Activated CD4-positive, alpha-beta memory T cell treated with anti-CD3 and anti-CD28 coated beads, Interleukin-2, amount 10 ng/mL, durations not matched to agents 7 days and 5 days (primary cell): ENCODE measurements at regions of chr13 and their contacts with region 1.

Region 1: DNA sequence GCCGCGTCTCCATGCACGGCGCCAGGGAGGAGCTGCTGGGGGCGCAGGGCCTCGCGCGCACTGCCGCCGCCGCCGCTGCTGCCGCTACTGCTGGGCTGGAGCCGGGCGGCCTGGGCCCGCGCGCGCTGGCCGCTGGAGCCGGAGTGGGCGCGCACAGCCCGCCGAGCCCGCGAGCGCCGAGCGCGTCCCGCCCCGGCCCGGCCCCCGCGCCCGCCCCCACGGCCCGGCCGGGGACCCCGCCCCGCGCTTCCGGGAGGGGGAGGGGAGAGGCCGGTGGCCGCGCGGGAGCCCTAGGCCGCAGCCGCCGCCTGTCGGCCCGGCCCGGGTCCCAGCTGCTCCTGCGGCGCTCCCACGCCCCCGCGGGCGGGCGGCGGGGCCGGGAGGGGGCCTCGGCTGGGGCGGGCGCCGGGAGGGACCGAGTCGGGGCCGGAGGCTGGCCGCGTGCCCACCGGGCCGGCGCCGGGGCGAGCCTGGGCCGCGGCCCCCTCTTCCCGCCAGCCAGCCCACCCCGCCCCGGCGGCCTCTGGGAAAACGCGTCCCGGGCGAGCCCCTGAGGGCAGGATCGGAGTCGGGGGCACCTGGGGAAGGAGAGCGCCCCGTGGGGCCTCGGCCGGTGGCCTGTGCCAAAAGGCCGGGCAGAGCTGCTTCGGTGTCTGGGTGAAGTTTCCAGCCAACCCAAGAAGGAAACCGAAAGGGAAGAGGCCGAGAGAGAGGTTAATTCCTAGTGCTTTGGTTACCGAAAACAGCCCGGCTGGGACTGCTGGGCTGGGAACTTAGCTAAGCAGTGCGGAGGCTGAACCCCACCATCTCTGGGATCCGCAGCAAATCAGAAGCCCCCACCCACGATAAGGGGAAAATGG is at the start of gene STK24:
- DNase-seq: peak; percentile 72
- H3K4me3 Mint-ChIP-seq: peak within 1 kb of the TSS; percentile 94
- H3K27ac Mint-ChIP-seq: peak within 1 kb of the TSS; percentile 86
- H3K4me1 Mint-ChIP-seq: peaks cover 38% of the 10 kb centered on the region
- H3K27me3 Mint-ChIP-seq: no peaks in the 10 kb centered on the region
- total RNA-seq, gene STK24: 189 to 204 TPM

Region 2: DNA sequence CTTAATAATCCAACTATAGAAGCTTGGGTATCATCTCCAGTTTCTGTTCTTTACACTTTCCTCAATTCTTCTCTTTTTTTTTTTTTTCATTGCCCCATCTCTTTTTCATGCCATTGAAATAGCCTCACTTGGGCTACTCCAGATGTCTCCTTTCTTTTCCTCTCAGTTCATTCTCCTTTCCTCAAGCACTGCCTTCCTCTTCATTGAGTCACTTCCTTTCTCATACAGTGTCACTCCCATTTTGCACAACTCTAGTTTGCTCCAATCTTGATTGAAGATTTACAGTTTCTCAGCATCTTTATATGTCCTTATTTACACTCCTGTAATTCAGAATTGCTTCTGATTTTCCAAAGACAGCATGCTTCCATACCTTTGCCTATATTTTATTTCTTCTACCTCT is 562.4 kb before region 1 on chr13:
- CTCF ChIA-PET with region 1: no interaction called
- POLR2A ChIA-PET with region 1: no interaction called
- DNase-seq: no peak
- H3K4me3 Mint-ChIP-seq: no peak overlapping the region
- H3K27ac Mint-ChIP-seq: no peak overlapping the region
- H3K4me1 Mint-ChIP-seq: peaks cover 5% of the 10 kb centered on the region
- H3K27me3 Mint-ChIP-seq: no peaks in the 10 kb centered on the region

Region 3: GRCh38 chr13:98484289-98485219 is 92.6 kb before region 1 on chr13:
- CTCF ChIA-PET with region 1: interaction called, 4 read pairs
- POLR2A ChIA-PET with region 1: interaction called, 11 read pairs
- DNase-seq: peak; percentile 83
- H3K4me3 Mint-ChIP-seq: peak overlapping the region; percentile 51
- H3K27ac Mint-ChIP-seq: peak overlapping the region; percentile 90
- H3K4me1 Mint-ChIP-seq: peaks cover 90% of the 10 kb centered on the region
- H3K27me3 Mint-ChIP-seq: no peaks in the 10 kb centered on the region

Region 4: GRCh38 chr13:98517576-98518310 is 59.5 kb before region 1 on chr13:
- CTCF ChIA-PET with region 1: interaction called, 3 read pairs
- POLR2A ChIA-PET with region 1: interaction called, 13 read pairs
- DNase-seq: peak; percentile 62
- H3K4me3 Mint-ChIP-seq: peak overlapping the region; percentile 20
- H3K27ac Mint-ChIP-seq: peak overlapping the region; percentile 75
- H3K4me1 Mint-ChIP-seq: peaks cover 96% of the 10 kb centered on the region
- H3K27me3 Mint-ChIP-seq: no peaks in the 10 kb centered on the region

Region 5: DNA sequence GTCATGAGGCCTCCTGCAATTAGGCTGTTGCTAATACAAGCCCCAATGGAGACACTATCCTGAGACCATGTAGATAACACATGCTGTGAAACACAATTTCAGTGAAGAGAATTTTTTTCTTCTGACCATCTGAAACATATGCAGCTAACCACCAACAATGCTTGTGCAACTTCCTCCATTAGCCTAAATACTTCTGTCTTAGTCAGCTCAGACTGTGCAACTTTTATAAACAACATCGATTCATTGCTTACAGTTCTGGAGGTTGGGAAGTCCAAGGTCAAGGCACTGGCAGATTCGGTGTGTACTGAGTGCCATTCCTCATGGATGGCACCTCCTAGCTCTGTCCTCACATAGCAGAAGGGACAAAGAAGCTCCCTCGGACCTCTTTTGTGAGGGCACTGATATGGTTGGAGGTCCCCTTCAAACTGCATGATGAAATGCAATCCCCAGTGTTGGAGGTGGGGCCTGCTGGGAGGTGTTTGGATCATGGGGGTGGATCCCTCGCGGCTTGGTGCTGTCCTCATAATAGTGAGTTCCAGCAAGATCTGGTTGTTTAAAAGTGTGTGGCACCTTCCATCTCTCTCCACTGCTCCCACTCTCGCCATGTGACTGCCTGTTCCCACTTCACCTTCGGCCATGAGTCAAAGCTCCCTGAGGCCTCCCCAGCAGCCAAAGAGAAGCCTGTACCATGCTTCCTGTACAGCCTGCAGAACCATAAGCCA is 28.0 kb before region 1 on chr13:
- CTCF ChIA-PET with region 1: no interaction called
- POLR2A ChIA-PET with region 1: interaction called, 10 read pairs
- DNase-seq: no peak
- H3K4me3 Mint-ChIP-seq: no peak overlapping the region
- H3K27ac Mint-ChIP-seq: peak overlapping the region; percentile 40
- H3K4me1 Mint-ChIP-seq: peaks cover 81% of the 10 kb centered on the region
- H3K27me3 Mint-ChIP-seq: no peaks in the 10 kb centered on the region

Region 6: DNA sequence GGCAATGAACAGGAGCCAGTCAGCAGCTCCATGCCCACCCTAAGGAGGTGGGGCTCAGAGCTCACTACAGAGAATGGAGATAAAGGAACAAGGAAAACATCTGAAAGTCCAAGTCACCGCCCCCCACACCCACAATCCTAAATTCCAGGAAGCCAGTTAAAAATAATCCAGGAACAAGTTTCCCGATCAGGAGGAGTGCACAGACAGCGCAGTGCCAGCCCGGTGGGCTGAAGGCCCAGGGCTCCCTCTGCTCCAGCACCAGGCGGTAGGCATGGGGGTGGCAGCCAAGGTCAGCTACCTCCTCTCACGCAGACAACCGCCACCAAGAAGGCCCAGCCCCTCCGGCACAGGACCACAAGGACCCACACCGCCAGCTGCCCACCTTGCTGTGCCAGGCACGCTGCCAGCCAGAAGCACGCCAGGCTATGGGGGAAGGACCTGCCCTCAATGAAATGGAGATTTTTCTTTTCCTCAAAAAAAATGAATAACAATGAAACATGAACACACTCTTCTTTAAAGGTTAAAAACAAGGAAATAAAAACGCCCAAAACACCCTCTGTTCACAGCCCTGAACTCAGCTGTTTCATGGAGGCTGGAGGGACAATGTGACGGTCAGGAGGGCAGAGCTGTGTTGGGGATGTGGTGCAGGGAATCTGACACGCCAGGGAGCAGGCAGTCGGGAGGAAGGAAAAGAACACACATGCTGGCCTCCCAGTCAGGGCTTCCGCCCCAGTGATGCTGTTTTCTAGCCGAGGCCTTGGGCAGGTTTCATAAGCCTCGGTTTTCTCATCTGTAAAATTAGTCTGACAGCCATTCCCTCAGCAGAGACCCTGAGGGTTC is 11.2 kb before region 1 on chr13:
- CTCF ChIA-PET with region 1: no interaction called
- POLR2A ChIA-PET with region 1: interaction called, 62 read pairs
- DNase-seq: no peak
- H3K4me3 Mint-ChIP-seq: peak overlapping the region; percentile 18
- H3K27ac Mint-ChIP-seq: peak overlapping the region; percentile 80
- H3K4me1 Mint-ChIP-seq: peaks cover 92% of the 10 kb centered on the region
- H3K27me3 Mint-ChIP-seq: no peaks in the 10 kb centered on the region

Region 7: DNA sequence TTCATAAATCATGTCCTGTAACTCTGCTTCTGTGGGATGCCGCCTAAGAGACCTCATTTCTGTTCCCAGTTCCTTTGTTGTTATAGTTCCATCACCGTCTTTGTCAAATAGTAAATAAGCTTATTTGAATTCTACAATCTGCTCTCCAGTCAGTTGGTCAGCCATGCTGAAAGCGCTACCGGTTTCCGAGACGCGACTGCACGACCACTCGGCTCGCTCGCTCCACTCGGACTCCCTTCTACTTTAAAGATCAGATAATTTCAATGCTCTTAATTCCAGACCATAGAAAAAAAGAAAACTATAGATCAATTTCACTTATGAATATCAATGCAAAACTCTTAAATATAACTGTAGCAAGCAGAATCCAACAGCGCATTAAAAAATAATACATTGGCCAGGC is 63.9 kb after region 1 on chr13:
- CTCF ChIA-PET with region 1: no interaction called
- POLR2A ChIA-PET with region 1: no interaction called
- DNase-seq: no peak
- H3K4me3 Mint-ChIP-seq: no peak overlapping the region
- H3K27ac Mint-ChIP-seq: no peak overlapping the region
- H3K4me1 Mint-ChIP-seq: no peaks in the 10 kb centered on the region
- H3K27me3 Mint-ChIP-seq: peaks cover 17% of the 10 kb centered on the region

Region 8: GRCh38 chr13:98741741-98742435 is 164.7 kb after region 1 on chr13:
- CTCF ChIA-PET with region 1: no interaction called
- POLR2A ChIA-PET with region 1: no interaction called
- DNase-seq: no peak
- H3K4me3 Mint-ChIP-seq: no peak overlapping the region
- H3K27ac Mint-ChIP-seq: no peak overlapping the region
- H3K4me1 Mint-ChIP-seq: no peaks in the 10 kb centered on the region
- H3K27me3 Mint-ChIP-seq: peaks cover 4% of the 10 kb centered on the region

Region 9: GRCh38 chr13:99314640-99315176 is 737.5 kb after region 1 on chr13:
- CTCF ChIA-PET with region 1: no interaction called
- POLR2A ChIA-PET with region 1: no interaction called
- DNase-seq: peak; percentile 64
- H3K4me3 Mint-ChIP-seq: peak overlapping the region; percentile 68
- H3K27ac Mint-ChIP-seq: peak overlapping the region; percentile 89
- H3K4me1 Mint-ChIP-seq: peaks cover 76% of the 10 kb centered on the region
- H3K27me3 Mint-ChIP-seq: no peaks in the 10 kb centered on the region